ENCODE measurements at regions of chr1 and their contacts with region 1.

Region 1: GRCh38 chr1:221753828-221754188 is 11.9 kb upstream of the DUSP10 start:
- DNase-seq: no peak
- H3K4me3 Mint-ChIP-seq: peak overlapping the region; percentile 28
- H3K27ac Mint-ChIP-seq: peak overlapping the region; percentile 81
- H3K4me1 Mint-ChIP-seq: peaks cover 50% of the 10 kb centered on the region
- H3K27me3 Mint-ChIP-seq: no peaks in the 10 kb centered on the region

Region 2: DNA sequence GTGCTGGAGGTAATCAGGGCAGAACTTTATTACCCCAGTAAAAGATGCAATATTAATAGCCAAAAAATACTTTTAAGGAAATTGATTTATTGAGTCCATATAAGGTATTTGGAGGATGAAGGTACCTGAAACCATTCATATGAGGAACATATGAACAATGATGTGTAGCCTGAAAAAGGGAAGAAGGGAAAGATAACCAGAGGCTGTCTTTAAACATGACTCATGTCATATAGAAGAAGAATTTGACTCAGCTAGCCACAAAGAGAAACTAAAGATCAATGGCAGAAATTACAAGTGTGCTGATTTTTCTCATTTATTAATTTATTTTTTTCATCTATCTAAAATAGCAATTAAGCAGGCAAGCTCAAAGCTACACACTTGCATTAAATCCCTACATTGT is 124.3 kb after region 1 on chr1:
- intact Hi-C with region 1: loop called (anchors 1 kb)
- DNase-seq: no peak
- H3K4me3 Mint-ChIP-seq: no peak overlapping the region
- H3K27ac Mint-ChIP-seq: no peak overlapping the region
- H3K4me1 Mint-ChIP-seq: peaks cover 12% of the 10 kb centered on the region
- H3K27me3 Mint-ChIP-seq: peaks cover 6% of the 10 kb centered on the region

Region 3: DNA sequence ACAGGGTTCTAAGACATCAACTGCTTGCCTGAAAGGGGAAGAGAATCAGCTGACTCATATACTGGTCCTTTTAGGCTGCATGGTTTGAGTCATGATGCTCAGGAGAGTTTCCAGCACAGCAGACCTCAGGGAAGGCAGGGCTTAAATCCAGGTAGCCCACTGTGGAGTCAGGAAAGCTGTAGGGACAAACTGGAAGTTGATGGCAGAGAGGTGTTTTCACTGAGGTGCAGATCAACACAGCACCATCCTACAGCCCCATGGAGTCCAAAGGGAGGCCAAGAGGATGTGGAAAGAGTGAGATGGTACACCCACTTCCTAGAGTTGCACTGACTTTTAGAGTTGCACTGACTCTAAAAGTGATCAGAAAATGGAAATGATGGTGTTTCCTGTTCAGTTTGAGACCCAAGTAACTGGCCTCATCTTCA is 240.5 kb after region 1 on chr1:
- intact Hi-C with region 1: loop called (anchors 1 kb)
- DNase-seq: peak; percentile 8
- H3K4me3 Mint-ChIP-seq: no peak overlapping the region
- H3K27ac Mint-ChIP-seq: peak overlapping the region; percentile 96
- H3K4me1 Mint-ChIP-seq: peaks cover 45% of the 10 kb centered on the region
- H3K27me3 Mint-ChIP-seq: no peaks in the 10 kb centered on the region

Region 4: DNA sequence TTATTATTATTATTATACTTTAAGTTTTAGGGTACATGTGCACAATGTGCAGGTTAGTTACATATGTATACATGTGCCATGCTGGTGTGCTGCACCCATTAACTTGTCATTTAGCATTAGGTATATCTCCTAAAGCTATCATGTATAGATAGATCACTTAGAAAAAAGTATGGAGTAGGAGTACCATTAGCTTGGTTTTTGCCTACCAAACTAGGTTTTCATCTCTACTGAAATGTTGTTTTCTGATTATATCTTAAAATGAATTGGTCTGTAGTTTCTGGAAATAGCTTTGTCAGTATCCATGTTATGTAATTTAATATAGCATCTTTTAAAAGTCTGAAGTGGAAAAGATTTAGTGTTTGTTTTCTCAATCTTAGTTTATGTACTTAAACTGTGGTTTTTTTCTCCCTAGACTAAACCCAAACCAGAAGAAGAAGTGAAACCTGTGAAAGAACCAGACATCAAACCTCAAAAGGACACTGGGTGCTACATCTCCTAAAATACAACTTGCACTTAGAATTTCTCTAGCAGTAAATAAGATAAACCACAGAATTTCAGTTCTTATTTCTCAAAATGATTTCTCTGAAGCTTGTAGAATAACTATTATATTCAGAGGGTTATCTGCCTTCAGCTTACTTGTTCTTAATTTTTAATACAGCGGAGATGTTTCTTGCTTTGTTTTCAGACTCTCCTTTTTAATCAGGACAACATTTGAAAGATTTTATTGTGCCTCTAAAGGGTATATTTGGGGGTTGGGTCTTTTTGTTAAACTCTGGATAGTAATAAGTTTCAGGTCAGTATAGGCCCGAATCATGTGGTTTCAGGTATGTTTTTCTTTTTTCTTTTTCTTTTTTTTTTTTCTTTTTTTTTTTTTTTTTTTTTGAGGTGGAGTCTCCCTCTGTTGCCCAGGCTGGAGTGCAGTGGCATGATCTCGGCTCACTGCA is 978.7 kb after region 1 on chr1:
- intact Hi-C with region 1: loop called (anchors 5 kb)
- DNase-seq: no peak
- H3K4me3 Mint-ChIP-seq: no peak overlapping the region
- H3K27ac Mint-ChIP-seq: peak overlapping the region; percentile 2
- H3K4me1 Mint-ChIP-seq: peaks cover 14% of the 10 kb centered on the region
- H3K27me3 Mint-ChIP-seq: no peaks in the 10 kb centered on the region

Measured in activated T-helper 2 cell treated with anti-CD3 and anti-CD28 coated beads, Interferon-gamma antibody, Interleukin-2, Interleukin-4, amounts not matched to agents 10 μg/mL and 5 μg/mL and 100 μg/mL, durations not matched to agents 14 hours and 24 hours and 36 hours (primary cell).